A673 (cell line): ENCODE measurements at regions of chr3 and their contacts with region 1.

Region 1: GRCh38 chr3:4928277-4928789 is 50.9 kb upstream of the BHLHE40 start:
- DNase-seq: no peak
- H3K4me3 ChIP-seq: no peak overlapping the region
- H3K27ac ChIP-seq: no peak overlapping the region
- H3K4me1 ChIP-seq: no peaks in the 10 kb centered on the region
- H3K27me3 ChIP-seq: no peaks in the 10 kb centered on the region
- CTCF ChIP-seq: no peak

Region 2: DNA sequence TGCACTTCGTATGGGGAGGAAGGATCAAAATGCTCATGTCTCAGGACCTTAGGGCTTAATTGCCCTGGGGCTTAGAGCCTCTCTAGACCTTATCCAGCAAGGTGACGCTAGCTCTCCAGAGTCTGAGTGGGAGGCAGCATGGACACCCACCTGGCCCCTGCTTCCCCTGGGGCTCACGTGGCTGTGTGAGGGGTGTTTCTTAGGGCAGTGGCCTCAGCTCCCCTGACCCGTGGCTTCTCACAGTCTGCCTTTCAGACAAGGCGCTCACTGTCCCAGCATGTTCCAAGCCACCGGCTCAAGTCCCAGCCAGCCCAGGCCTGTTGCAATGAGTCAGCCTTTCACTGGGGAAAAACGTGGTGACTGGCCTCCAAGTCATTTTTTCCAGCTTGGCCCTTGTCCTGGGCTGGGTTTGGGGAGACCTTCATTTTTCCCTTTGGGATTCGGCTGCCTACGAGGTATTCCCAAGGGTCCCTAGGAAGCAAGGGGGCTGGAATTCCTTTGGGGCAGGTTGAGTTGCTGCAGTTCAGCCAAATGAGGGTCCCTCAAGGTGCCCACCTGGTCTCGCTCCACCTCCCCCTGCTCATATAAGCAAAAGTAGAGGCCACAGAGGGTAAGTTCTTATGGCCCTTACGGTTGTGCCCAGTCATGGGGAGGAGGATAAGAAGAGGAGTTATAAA is 66.6 kb after region 1 on chr3:
- CTCF ChIA-PET with region 1: interaction called, 11 read pairs
- POLR2A ChIA-PET with region 1: no interaction called
- intact Hi-C with region 1: no loop called
- DNase-seq: no peak
- H3K4me3 ChIP-seq: no peak overlapping the region
- H3K27ac ChIP-seq: no peak overlapping the region
- H3K4me1 ChIP-seq: no peaks in the 10 kb centered on the region
- H3K27me3 ChIP-seq: no peaks in the 10 kb centered on the region
- CTCF ChIP-seq: no peak